Activated T-helper 2 cell treated with anti-CD3 and anti-CD28 coated beads, Interferon-gamma antibody, Interleukin-2, Interleukin-4, amounts not matched to agents 10 μg/mL and 5 μg/mL and 100 μg/mL, durations not matched to agents 14 hours and 24 hours and 36 hours (primary cell): ENCODE measurements at regions of chr5 and their contacts with region 1.

Region 1: GRCh38 chr5:157858527-157859226 is at the start of gene CLINT1:
- DNase-seq: peak; percentile 83
- H3K4me3 Mint-ChIP-seq: peak within 1 kb of the TSS; percentile 86
- H3K27ac Mint-ChIP-seq: peak within 1 kb of the TSS; percentile 98
- H3K4me1 Mint-ChIP-seq: peaks cover 61% of the 10 kb centered on the region
- H3K27me3 Mint-ChIP-seq: no peaks in the 10 kb centered on the region
- total RNA-seq, gene CLINT1: 95.2 and 100 TPM in 2 replicates

Region 2: GRCh38 chr5:157464519-157465171 is 394.0 kb before region 1 on chr5:
- intact Hi-C with region 1: loop called (anchors 1 kb)
- DNase-seq: peak; percentile 43
- H3K4me3 Mint-ChIP-seq: no peak overlapping the region
- H3K27ac Mint-ChIP-seq: peak overlapping the region; percentile 82
- H3K4me1 Mint-ChIP-seq: peaks cover 32% of the 10 kb centered on the region
- H3K27me3 Mint-ChIP-seq: peaks cover 17% of the 10 kb centered on the region

Region 3: GRCh38 chr5:157731272-157732129 is 127.2 kb before region 1 on chr5 and contains the start of gene THG1L:
- intact Hi-C with region 1: loop called (anchors 2 kb)
- DNase-seq: peak; percentile 97
- H3K4me3 Mint-ChIP-seq: peak within 1 kb of the TSS; percentile 90
- H3K27ac Mint-ChIP-seq: peak within 1 kb of the TSS; percentile 95
- H3K4me1 Mint-ChIP-seq: peaks cover 26% of the 10 kb centered on the region
- H3K27me3 Mint-ChIP-seq: no peaks in the 10 kb centered on the region
- total RNA-seq, gene THG1L: 28.8 and 29.3 TPM in 2 replicates

Region 4: DNA sequence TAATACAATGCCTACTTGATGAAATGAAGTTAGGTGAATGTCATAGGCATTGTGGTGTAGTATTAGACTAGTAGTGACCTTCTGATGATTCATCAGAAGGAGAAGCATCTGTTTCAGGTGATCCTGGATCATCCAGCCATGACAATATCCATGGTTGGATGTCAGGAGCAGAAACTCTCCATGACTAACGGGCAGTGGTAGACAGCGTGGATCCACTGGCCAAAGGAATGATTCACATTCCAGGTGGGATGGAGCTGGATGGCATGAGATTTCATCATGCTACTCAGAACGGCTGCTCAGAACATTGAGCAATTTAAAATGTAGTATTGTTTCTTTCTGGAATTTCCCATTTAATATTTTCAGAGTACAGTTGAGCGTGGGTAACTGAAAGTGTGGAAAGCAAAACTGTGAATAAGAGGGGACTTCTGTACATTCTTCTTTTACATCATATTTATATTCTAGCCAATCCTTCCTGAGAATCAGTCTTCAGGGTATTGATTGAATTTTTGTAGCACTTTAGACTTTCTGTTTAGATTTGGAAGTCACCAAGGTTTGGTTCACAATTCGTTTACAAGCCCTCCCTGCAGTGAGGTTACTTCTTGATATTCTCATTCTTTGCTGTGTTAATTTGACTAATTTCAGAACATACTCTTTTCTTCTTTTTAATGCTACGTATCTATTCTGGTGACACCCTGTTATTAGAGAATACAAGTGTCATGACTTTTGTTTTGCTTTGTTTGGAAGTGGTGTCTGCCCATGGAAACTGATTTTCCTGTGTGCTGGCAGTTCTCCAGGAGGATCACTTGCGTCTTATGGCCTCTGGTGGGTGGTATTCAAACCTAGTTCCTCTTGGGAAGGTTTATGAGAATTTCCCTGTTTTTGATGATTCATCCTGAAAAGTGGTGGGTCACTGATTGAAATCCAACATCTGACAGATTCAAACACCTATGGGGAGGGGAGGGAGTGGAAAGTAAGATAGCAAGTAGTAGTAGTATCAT is 12.5 kb after region 1 on chr5:
- intact Hi-C with region 1: loop called (anchors 1 kb)
- DNase-seq: no peak
- H3K4me3 Mint-ChIP-seq: no peak overlapping the region
- H3K27ac Mint-ChIP-seq: peak overlapping the region; percentile 47
- H3K4me1 Mint-ChIP-seq: peaks cover 16% of the 10 kb centered on the region
- H3K27me3 Mint-ChIP-seq: peaks cover 4% of the 10 kb centered on the region

Region 5: GRCh38 chr5:157917899-157918809 is 59.5 kb after region 1 on chr5:
- intact Hi-C with region 1: loop called (anchors 2 kb)
- DNase-seq: peak; percentile 42
- H3K4me3 Mint-ChIP-seq: no peak overlapping the region
- H3K27ac Mint-ChIP-seq: peak overlapping the region; percentile 84
- H3K4me1 Mint-ChIP-seq: peaks cover 32% of the 10 kb centered on the region
- H3K27me3 Mint-ChIP-seq: no peaks in the 10 kb centered on the region

Region 6: DNA sequence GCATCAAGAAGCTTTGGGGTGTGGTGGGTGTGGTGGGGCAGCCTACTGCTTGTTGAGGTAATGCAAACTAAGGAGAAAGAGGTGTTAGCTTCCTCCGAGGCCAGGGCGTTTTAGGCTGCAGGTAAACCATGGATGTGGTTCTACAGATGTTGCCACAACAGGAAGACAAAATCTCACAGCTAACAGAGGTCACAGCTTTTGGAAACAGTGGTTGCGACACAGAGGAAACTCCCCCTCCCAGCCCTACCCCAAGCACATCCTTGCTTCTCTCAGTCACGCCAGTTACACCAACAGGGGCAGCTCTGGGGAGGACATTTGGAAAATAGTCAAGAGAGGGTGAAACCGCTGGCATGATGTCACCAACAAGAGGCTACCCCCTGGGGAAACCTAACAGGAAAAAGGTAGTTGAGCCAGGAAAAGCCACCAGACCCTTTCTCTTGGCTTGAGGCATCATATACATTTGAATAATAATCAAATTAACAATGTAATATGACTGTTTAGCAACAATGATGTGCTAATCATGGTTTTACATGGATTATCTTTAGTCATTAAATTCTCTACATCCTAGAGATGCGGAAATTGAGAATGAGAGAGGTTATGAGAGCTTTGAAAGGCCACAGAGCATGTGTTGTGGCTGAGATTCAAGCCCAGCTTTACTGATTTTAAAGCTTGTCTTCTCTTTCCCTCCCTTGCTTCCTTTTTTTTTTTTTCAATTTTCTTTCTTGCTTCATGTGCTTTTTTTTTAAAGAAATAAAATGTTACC is 1553.8 kb after region 1 on chr5:
- intact Hi-C with region 1: loop called (anchors 5 kb)
- DNase-seq: peak; percentile 79
- H3K4me3 Mint-ChIP-seq: no peak overlapping the region
- H3K27ac Mint-ChIP-seq: no peak overlapping the region
- H3K4me1 Mint-ChIP-seq: peaks cover 48% of the 10 kb centered on the region
- H3K27me3 Mint-ChIP-seq: peaks cover 32% of the 10 kb centered on the region